MCF 10A (cell line): ENCODE measurements at regions of chr7 and their contacts with region 1.

Region 1: GRCh38 chr7:35694781-35695472 is at the start of gene HERPUD2:
- DNase-seq: peak; percentile 94
- H3K4me3 Mint-ChIP-seq: peak within 1 kb of the TSS; percentile 93
- H3K27ac Mint-ChIP-seq: peak within 1 kb of the TSS; percentile 96
- H3K4me1 Mint-ChIP-seq: peaks cover 29% of the 10 kb centered on the region
- H3K27me3 Mint-ChIP-seq: no peaks in the 10 kb centered on the region
- CTCF ChIP-seq: no peak
- total RNA-seq, gene HERPUD2: 28.1 and 29.0 TPM in 2 replicates

Region 2: DNA sequence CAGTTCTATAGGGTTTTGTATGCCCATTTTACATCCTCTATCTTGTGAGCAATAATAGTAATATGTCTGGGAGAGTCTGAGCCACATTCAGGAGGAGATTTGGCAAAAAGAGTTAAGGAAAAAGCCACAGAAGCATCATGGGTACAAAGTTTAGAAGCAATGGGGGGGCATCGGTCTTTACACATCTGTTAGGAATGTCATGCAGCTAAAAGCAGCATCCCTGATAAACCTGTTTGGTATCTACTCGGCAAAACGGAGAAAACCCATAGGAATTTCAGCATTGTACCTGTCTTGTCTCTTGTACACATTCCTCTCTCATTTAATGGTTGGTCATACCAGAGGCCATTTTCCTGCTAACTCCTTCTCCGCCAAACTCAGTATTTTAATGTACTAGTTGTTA is 12.5 kb after region 1 on chr7:
- CTCF ChIA-PET with region 1: interaction called, 47 read pairs
- POLR2A ChIA-PET with region 1: interaction called, 5 read pairs
- intact Hi-C with region 1: no loop called
- DNase-seq: no peak
- H3K4me3 Mint-ChIP-seq: no peak overlapping the region
- H3K27ac Mint-ChIP-seq: no peak overlapping the region
- H3K4me1 Mint-ChIP-seq: peaks cover 5% of the 10 kb centered on the region
- H3K27me3 Mint-ChIP-seq: no peaks in the 10 kb centered on the region
- CTCF ChIP-seq: no peak

Region 3: GRCh38 chr7:35735396-35735795 is 40.5 kb after region 1 on chr7:
- CTCF ChIA-PET with region 1: no interaction called
- POLR2A ChIA-PET with region 1: interaction called, 8 read pairs
- intact Hi-C with region 1: loop called (anchors 1 kb)
- DNase-seq: no peak
- H3K4me3 Mint-ChIP-seq: no peak overlapping the region
- H3K27ac Mint-ChIP-seq: no peak overlapping the region
- H3K4me1 Mint-ChIP-seq: peaks cover 7% of the 10 kb centered on the region
- H3K27me3 Mint-ChIP-seq: no peaks in the 10 kb centered on the region
- CTCF ChIP-seq: no peak

Region 4: GRCh38 chr7:35839860-35840854 is 145.2 kb after region 1 on chr7:
- CTCF ChIA-PET with region 1: no interaction called
- POLR2A ChIA-PET with region 1: no interaction called
- intact Hi-C with region 1: no loop called
- DNase-seq: peak; percentile 23
- H3K4me3 Mint-ChIP-seq: no peak overlapping the region
- H3K27ac Mint-ChIP-seq: peak overlapping the region; percentile 6
- H3K4me1 Mint-ChIP-seq: peaks cover 6% of the 10 kb centered on the region
- H3K27me3 Mint-ChIP-seq: no peaks in the 10 kb centered on the region
- CTCF ChIP-seq: no peak

Region 5: GRCh38 chr7:36021367-36021766 is 326.4 kb after region 1 on chr7:
- CTCF ChIA-PET with region 1: no interaction called
- POLR2A ChIA-PET with region 1: no interaction called
- intact Hi-C with region 1: no loop called
- DNase-seq: peak; percentile 39
- H3K4me3 Mint-ChIP-seq: no peak overlapping the region
- H3K27ac Mint-ChIP-seq: no peak overlapping the region
- H3K4me1 Mint-ChIP-seq: peaks cover 8% of the 10 kb centered on the region
- H3K27me3 Mint-ChIP-seq: no peaks in the 10 kb centered on the region
- CTCF ChIP-seq: peak; percentile 54

Region 6: GRCh38 chr7:37336259-37336658 is 1641.3 kb after region 1 on chr7:
- CTCF ChIA-PET with region 1: no interaction called
- POLR2A ChIA-PET with region 1: no interaction called
- intact Hi-C with region 1: no loop called
- DNase-seq: no peak
- H3K4me3 Mint-ChIP-seq: no peak overlapping the region
- H3K27ac Mint-ChIP-seq: no peak overlapping the region
- H3K4me1 Mint-ChIP-seq: peaks cover 19% of the 10 kb centered on the region
- H3K27me3 Mint-ChIP-seq: no peaks in the 10 kb centered on the region
- CTCF ChIP-seq: no peak